GM12878 (cell line): ENCODE measurements at regions of chr6 and their contacts with region 1.

Region 1: DNA sequence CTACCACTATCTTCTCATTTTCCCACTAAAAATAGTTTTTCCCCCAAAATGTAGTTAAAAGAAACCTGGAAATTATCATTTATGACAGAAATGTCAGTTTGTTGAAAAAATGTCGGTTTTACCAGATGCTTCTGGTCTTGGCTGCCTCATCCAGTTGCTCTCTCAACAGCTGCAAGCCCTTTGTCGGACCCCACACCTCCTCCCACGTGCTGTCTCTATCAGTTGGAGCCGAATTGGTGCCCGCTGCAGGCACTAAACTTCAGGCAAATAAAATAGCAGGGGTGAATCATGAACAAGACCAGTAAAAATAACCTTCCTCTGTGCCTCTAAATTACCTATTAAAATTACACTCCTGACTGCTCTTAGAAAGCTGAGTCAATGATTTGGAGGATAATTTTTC is 129.5 kb upstream of the CEP162 start:
- DNase-seq: no peak
- ATAC-seq: no peak
- H3K4me3 ChIP-seq: no peak overlapping the region
- H3K27ac ChIP-seq: no peak overlapping the region
- H3K4me1 ChIP-seq: no peaks in the 10 kb centered on the region
- H3K27me3 ChIP-seq: no peaks in the 10 kb centered on the region
- CTCF ChIP-seq: no peak
- EP300 ChIP-seq: no peak
- POLR2A ChIP-seq: no peak
- RAD21 ChIP-seq: no peak

Region 2: DNA sequence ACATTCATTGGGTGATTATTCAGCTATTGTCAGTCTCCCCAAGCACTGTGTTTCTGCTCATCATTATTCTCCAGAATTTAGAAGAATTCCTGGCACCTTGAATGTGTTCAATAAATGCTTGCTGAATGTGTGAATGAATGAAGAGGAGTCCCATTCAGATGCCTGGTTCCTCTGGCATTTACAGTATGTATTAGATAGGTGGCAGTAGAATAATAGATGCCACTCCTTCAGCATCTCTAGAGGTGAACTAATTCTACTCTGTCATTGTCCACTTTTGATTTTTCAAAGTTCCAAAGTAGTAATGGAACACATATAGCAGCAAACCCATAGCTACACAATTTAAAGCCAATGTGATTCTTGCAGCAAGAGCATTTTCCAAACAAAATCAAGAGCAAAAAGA is 10.5 kb before region 1 on chr6:
- CTCF ChIA-PET with region 1: interaction called, 6 read pairs
- POLR2A ChIA-PET with region 1: no interaction called
- RAD21 ChIA-PET with region 1: interaction called, 9 read pairs
- SMC1A ChIA-PET with region 1: interaction called, 14 read pairs
- in situ Hi-C with region 1: no loop called
- intact Hi-C with region 1: no loop called
- DNase-seq: no peak
- ATAC-seq: peak; percentile 33; the same call in 1 of the 3 replicates
- H3K4me3 ChIP-seq: no peak overlapping the region
- H3K27ac ChIP-seq: no peak overlapping the region
- H3K4me1 ChIP-seq: no peaks in the 10 kb centered on the region
- H3K27me3 ChIP-seq: no peaks in the 10 kb centered on the region
- CTCF ChIP-seq: no peak; a peak in 1 of 6 replicates
- EP300 ChIP-seq: no peak
- POLR2A ChIP-seq: no peak
- RAD21 ChIP-seq: no peak

Region 3: GRCh38 chr6:84371681-84372080 is 14.8 kb after region 1 on chr6:
- CTCF ChIA-PET with region 1: interaction called, 5 read pairs
- POLR2A ChIA-PET with region 1: no interaction called
- RAD21 ChIA-PET with region 1: no interaction called
- SMC1A ChIA-PET with region 1: interaction called, 10 read pairs
- in situ Hi-C with region 1: no loop called
- intact Hi-C with region 1: no loop called
- DNase-seq: no peak
- ATAC-seq: peak; percentile 84
- H3K4me3 ChIP-seq: no peak overlapping the region
- H3K27ac ChIP-seq: no peak overlapping the region
- H3K4me1 ChIP-seq: no peaks in the 10 kb centered on the region
- H3K27me3 ChIP-seq: no peaks in the 10 kb centered on the region
- CTCF ChIP-seq: no peak
- EP300 ChIP-seq: no peak
- POLR2A ChIP-seq: no peak
- RAD21 ChIP-seq: no peak